Kidney (tissue), 22 donors: ENCODE measurements at regions of chr7 and their contacts with region 1.

Region 1: GRCh38 chr7:44858161-44858560 is 10.3 kb upstream of the H2AZ2 start:
- DNase-seq: no peak
- H3K4me3 ChIP-seq: no peak overlapping the region
- H3K27ac ChIP-seq: no peak overlapping the region
- H3K4me1 ChIP-seq: no peaks in the 10 kb centered on the region
- H3K27me3 ChIP-seq: no peaks in the 10 kb centered on the region
- CTCF ChIP-seq: no peak

Region 2: GRCh38 chr7:44921607-44922359 is 63.6 kb after region 1 on chr7:
- intact Hi-C with region 1: loop called (anchors 10 kb)
- DNase-seq: peak; percentile 73 to 95 (median 81)
- H3K4me3 ChIP-seq: no peak overlapping the region
- H3K27ac ChIP-seq: no peak overlapping the region
- H3K4me1 ChIP-seq: peaks cover 0 to 2% (median 0%) of the 10 kb centered on the region in 3 donors
- H3K27me3 ChIP-seq: no peaks in the 10 kb centered on the region
- CTCF ChIP-seq: peak; percentile 87

Region 3: DNA sequence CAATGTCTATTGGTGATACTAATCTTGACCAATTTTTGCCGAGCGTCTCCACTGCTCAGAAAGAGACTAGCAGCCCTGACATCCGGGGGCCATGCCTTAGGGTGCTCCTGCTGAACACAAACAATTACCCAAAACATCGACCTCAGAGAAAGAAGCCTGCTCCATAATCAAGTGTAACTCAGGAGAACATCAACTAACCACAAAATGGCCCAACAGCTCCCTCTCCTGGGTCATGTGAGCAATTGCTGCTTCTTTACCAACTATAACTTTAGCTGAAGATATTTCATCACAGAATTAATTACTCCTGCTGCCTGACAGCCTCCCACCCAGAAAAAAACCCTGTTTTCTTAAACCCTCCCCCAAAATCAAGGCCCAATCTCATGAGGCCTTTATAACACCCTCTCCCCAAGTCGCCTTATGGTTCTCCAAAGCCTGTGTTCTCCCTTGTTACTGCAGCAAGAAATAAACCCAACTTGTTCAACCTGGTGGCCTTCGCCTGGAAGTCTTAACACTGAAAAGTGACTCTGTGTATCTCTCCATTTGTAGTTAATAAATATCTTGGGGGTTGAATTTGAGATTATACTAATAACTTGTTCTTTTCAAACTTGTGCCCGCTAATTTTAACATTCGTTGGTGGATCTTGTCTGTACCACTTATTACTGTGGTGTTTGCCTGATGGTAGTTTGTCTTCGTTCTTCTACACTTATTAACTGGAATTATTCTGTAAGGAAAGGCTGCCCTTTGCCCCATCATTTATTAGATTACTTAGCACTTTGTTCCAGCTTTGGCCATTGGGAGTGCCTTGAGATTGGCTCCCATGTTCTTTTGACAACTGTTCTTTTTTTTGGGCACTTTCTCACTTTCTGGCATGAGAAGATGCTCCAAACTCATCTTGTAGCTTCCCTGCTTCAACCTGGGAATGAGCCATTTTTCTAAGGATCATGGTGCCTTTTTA is 278.2 kb after region 1 on chr7:
- intact Hi-C with region 1: loop called (anchors 10 kb)
- DNase-seq: peak in 3 of 5 donors; percentile 62 to 93 (median 83)
- H3K4me3 ChIP-seq: no peak overlapping the region
- H3K27ac ChIP-seq: no peak overlapping the region
- H3K4me1 ChIP-seq: no peaks in the 10 kb centered on the region
- H3K27me3 ChIP-seq: no peaks in the 10 kb centered on the region
- CTCF ChIP-seq: peak; percentile 95